ENCODE measurements at regions of chr11 and their contacts with region 1.

Region 1: DNA sequence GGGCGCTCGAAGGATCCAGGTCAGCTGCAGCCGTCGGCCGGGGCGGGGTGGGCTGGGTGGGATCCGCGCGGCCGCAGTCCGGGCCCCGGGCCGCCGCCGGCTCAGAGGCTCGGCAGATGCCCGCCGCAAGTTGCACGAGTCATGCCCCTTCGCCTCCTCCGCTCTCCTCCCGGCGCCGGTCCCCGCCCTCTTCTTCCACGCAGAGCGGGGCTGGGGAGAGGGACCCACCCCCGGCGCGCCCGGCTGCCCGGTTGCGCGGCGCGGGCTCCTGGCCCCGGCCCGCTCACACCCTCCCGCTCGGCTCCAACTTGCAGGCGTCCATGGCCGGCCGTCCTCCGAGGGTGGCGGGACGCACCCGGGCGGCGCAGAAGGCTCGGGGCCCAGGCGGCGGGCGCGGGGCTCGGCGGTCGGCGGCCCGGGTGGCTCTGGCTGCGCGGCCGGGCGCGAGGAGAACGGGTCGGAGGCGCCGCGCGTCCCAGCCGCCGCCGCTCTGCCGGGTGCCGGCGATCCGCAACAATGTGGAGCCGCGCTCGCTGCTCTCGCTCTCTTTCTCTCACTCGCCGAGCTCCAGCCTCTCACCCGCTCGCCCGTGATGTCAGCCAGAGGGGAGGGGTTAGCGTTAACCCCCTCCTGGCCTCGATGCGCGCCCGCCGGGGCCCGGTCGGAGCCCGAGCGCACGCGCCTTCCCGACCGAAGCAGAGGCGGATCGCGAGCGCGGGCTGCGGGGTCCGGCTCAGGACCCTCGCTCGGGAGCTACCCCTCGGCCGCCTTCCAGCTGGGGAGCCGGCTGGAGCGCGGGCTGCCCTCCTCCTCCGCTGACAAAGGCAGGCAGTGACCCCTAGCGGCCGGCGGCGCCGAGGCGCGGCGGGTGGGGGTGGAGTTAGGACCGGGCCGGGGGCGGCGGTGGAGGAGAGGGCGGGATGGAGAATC is at the start of gene NECTIN1:
- DNase-seq: peak; percentile 93
- ATAC-seq: peak; percentile 86
- H3K4me3 Mint-ChIP-seq: peak within 1 kb of the TSS; percentile 94
- H3K27ac Mint-ChIP-seq: peak within 1 kb of the TSS; percentile 79
- H3K4me1 Mint-ChIP-seq: peaks cover 38% of the 10 kb centered on the region
- H3K27me3 Mint-ChIP-seq: peaks cover 20% of the 10 kb centered on the region
- CTCF ChIP-seq: peak; percentile 49
- total RNA-seq, gene NECTIN1: 36.4 and 36.7 TPM in 2 replicates

Region 2: GRCh38 chr11:119481021-119481666 is 247.8 kb before region 1 on chr11:
- CTCF ChIA-PET with region 1: interaction called, 6 read pairs
- POLR2A ChIA-PET with region 1: no interaction called
- intact Hi-C with region 1: loop called (anchors 1 kb)
- DNase-seq: peak; percentile 70
- ATAC-seq: peak; percentile 79
- H3K4me3 Mint-ChIP-seq: no peak overlapping the region
- H3K27ac Mint-ChIP-seq: no peak overlapping the region
- H3K4me1 Mint-ChIP-seq: peaks cover 5% of the 10 kb centered on the region
- H3K27me3 Mint-ChIP-seq: peaks cover 40% of the 10 kb centered on the region
- CTCF ChIP-seq: no peak

Region 3: DNA sequence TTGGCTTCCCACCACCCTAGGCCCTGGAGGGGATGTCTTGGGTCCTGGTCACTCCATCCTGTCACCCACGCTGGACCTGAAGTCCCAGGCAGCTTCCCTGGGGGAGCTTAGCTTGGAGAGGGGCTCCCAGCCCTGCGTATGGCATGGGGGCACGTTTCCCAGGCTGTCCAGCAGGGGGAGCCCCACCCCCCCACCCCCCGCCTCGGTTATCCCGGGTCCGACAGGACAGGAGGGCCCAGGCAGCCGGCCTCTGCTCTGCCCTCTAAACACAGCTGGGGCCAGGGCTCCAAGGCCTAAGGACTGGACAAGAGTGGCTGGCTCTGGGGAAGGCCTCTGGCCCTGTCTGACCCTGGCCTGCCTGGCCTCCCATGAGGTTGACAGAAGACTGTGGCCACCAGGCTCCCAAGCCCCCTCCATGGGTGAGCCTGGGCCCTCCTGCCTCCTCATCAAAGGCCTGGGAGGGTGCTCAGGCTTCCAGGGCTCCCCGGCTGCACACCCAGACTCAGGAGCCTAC is 104.8 kb before region 1 on chr11:
- CTCF ChIA-PET with region 1: no interaction called
- POLR2A ChIA-PET with region 1: no interaction called
- intact Hi-C with region 1: loop called (anchors 1 kb)
- DNase-seq: no peak
- ATAC-seq: no peak
- H3K4me3 Mint-ChIP-seq: no peak overlapping the region
- H3K27ac Mint-ChIP-seq: no peak overlapping the region
- H3K4me1 Mint-ChIP-seq: peaks cover 3% of the 10 kb centered on the region
- H3K27me3 Mint-ChIP-seq: peaks cover 18% of the 10 kb centered on the region
- CTCF ChIP-seq: no peak

Region 4: DNA sequence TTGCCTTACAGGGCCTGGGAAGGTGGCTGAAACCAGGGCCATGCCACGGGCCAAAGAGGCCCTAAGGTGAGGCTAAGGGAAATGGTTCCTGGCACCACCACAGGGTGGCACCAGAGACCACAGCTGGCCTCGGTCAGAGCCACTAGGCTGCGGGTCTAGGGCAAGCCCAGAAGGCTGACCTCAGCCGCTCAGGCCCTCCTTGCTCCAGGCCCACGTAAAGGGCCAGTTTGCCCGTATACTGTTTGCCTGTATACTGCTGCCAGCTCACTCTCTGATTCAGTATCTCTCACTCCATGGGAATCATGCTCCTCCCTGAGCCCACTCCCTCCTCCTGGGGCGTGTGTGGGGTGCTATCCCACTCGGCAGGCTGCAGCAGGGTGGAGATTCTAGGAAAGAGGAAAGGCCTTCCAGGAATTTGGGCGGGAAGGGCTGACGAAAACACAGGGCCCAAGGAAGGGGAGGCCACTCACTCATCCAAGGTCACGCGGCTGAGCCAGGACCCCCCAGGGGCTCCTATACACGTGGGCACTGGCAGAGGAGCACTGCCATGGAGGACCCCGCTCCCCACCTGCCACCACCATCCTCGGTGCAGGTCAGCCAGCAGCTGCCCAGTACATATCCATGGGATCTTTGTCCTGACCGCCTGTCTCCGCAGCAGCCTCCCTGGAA is 62.3 kb before region 1 on chr11:
- CTCF ChIA-PET with region 1: interaction called, 117 read pairs
- POLR2A ChIA-PET with region 1: no interaction called
- intact Hi-C with region 1: no loop called
- DNase-seq: peak; percentile 61
- ATAC-seq: peak; percentile 95
- H3K4me3 Mint-ChIP-seq: no peak overlapping the region
- H3K27ac Mint-ChIP-seq: no peak overlapping the region
- H3K4me1 Mint-ChIP-seq: no peaks in the 10 kb centered on the region
- H3K27me3 Mint-ChIP-seq: no peaks in the 10 kb centered on the region
- CTCF ChIP-seq: no peak

Region 5: DNA sequence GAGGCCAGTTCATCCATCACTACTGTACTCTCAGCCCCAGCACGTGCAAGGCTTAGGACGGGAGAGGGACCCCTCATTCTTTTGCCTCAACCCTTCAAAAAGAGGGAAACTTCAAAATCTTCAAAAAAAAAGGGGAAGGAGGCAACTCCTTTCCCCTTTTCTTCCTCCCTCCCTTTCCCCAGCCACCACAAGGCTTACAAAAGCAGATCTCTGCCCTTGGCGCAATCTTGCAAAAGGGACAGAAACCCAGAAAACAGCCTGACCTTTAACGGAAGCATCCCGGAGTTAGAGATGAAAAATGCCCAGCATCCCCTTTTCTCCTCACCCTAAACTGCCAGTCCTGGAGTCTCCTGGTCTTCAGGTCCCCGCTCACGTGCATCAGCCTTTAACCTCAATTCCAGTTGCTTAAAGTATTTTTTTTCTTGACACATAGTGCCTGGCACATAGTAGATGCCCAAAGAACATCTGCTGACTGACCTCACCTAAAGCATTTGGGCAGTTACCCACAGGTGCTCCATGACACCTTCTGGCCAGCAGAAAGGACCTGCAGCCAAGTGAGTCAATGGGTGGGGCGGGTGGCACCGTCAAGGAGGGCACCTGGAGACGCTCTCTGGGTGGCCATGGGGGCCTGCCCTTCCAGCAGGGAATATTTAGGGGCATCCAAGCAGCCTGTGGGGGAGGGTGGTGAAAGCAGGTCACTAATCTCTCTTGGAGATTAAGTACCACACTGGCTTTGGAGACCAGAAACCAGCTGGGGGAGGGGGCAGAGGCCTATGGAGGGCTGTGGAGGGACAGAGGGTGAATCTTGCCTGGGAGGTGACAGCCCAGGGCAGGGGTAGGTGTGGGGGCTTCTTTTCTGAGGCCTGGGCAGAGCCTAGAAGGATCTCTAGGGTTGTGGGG is 16.2 kb before region 1 on chr11:
- CTCF ChIA-PET with region 1: interaction called, 4 read pairs
- POLR2A ChIA-PET with region 1: interaction called, 3 read pairs
- intact Hi-C with region 1: loop called (anchors 2 kb)
- DNase-seq: no peak
- ATAC-seq: no peak
- H3K4me3 Mint-ChIP-seq: no peak overlapping the region
- H3K27ac Mint-ChIP-seq: no peak overlapping the region
- H3K4me1 Mint-ChIP-seq: no peaks in the 10 kb centered on the region
- H3K27me3 Mint-ChIP-seq: peaks cover 16% of the 10 kb centered on the region
- CTCF ChIP-seq: no peak

Region 6: DNA sequence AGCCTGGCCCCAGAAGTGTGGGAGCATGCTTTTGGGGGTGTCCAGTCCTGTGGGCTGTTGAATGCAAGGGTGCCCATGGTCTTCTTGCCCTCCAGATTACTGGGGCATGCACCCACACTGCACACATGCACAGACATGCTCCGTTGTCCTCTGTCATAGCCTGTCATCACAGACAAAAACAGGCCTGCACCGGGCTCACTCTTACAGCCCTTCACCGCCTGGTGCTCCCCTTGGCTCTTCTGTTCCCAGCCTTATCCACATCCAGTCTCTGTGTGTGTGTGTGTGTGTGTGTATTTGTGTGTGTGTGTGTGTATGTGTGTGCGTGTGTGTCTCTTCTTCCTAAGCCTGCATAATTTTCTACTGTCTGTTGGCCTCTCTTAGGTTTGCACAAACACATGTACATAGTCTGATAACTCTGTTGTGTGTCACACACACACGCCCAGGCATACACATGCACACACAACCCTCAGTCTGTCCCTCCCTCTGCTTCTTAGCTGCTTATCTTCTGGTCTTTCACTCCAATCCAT is 23.5 kb after region 1 on chr11:
- CTCF ChIA-PET with region 1: interaction called, 12 read pairs
- POLR2A ChIA-PET with region 1: interaction called, 22 read pairs
- intact Hi-C with region 1: loop called (anchors 1 kb)
- DNase-seq: no peak
- ATAC-seq: peak; percentile 73
- H3K4me3 Mint-ChIP-seq: peak overlapping the region; percentile 84
- H3K27ac Mint-ChIP-seq: peak overlapping the region; percentile 94
- H3K4me1 Mint-ChIP-seq: peaks cover 35% of the 10 kb centered on the region
- H3K27me3 Mint-ChIP-seq: peaks cover 4% of the 10 kb centered on the region
- CTCF ChIP-seq: no peak

Measured in activated B cell treated with CpG ODN at 0.5 μM for 24 hours (primary cell).